Activated naive CD4-positive, alpha-beta T cell treated with anti-CD3 and anti-CD28 coated beads for 36 hours (primary cell): ENCODE measurements at regions of chr10 and their contacts with region 1.

Region 1: DNA sequence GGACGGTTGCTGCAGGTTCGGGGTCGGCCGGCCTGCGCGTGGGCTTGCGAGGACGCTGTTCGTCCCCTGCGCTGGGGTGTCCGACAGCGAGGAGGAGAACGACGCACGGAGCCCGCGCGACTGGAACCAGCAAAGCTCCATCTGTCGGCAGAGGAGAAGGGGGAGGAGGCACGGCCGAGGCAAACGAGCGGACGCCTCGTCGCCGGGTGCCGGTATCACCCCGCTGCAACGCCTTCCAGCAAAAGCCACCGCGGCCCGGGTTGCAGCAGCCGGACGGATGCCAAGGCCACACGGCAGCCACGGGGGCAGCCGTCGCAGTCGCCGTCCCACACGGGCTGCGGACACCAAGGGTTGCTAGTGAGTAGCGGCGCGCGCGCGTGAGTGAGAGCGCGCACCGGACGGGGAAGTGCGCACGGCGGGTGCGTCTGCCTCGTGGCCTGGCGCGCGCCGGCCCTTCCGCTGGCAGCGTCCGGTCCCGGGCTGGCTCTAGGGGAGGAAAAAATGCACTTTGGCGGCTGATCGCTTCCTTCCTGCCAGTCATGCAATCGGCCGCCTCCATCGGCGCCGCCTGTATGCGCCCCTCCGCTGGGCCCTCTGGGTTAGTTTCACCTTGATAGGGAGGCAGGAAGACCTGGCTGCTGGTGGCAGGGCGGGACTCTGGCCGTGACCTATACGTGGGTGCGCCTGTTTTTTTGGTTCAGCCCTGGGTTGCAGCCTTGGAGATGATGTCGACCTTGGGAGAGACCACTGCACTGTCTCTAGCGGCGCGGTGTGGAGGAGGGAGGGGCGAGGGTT is 434 bp downstream of the STAMBPL1 start:
- DNase-seq: peak; percentile 82
- H3K4me3 Mint-ChIP-seq: peak overlapping the region; percentile 95
- H3K27ac Mint-ChIP-seq: peak overlapping the region; percentile 97
- H3K4me1 Mint-ChIP-seq: peaks cover 58% of the 10 kb centered on the region
- H3K27me3 Mint-ChIP-seq: no peaks in the 10 kb centered on the region

Region 2: GRCh38 chr10:88908194-88908593 is 27.7 kb after region 1 on chr10:
- CTCF ChIA-PET with region 1: interaction called, 3 read pairs
- intact Hi-C with region 1: loop called (anchors 1 kb)
- DNase-seq: peak; percentile 44
- H3K4me3 Mint-ChIP-seq: no peak overlapping the region
- H3K27ac Mint-ChIP-seq: peak overlapping the region; percentile 25
- H3K4me1 Mint-ChIP-seq: peaks cover 20% of the 10 kb centered on the region
- H3K27me3 Mint-ChIP-seq: no peaks in the 10 kb centered on the region

Region 3: DNA sequence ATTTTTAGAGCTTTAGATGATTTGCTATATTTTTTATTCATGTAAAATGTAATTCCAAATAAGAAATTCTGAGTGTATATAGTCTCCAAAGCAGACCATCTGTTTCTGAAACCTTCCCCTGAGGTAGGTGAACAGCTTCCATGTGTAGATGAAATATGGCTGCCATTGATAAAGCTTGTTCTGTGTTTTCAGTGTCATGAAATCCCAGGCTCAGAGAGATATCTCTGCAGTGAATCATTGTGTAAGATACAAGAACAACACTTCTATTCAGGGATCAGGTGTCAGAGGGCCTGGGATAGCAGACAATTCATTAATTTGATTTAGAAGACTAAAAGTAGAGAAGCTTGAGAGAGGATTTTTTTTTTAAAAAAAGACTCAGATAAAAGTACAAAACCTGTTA is 43.0 kb after region 1 on chr10:
- CTCF ChIA-PET with region 1: no interaction called
- intact Hi-C with region 1: no loop called
- DNase-seq: no peak
- H3K4me3 Mint-ChIP-seq: no peak overlapping the region
- H3K27ac Mint-ChIP-seq: no peak overlapping the region
- H3K4me1 Mint-ChIP-seq: no peaks in the 10 kb centered on the region
- H3K27me3 Mint-ChIP-seq: no peaks in the 10 kb centered on the region

Region 4: DNA sequence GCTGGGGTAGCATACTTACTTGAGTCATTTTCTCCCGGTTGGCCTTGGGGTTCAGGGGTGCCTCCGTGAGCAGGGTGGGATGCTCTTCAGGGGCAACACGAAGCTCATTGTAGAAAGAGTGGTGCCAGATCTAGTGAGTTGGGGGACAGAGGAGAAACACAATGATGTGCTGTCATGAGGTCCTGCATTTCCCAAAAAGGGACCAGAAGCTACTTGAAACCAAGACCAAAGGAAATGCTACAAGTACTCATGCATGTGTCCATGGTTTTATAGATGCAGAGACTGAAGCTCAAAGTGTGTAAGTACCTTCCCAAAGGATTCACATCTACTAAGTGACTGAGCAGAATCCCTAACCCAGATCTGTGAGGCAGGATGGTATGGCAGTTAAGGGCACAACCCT is 63.3 kb after region 1 on chr10:
- CTCF ChIA-PET with region 1: no interaction called
- intact Hi-C with region 1: no loop called
- DNase-seq: no peak
- H3K4me3 Mint-ChIP-seq: no peak overlapping the region
- H3K27ac Mint-ChIP-seq: no peak overlapping the region
- H3K4me1 Mint-ChIP-seq: peaks cover 9% of the 10 kb centered on the region
- H3K27me3 Mint-ChIP-seq: no peaks in the 10 kb centered on the region